Activated B cell treated with CpG ODN at 0.5 μM for 24 hours (primary cell): ENCODE measurements at regions of chr14 and their contacts with region 1.

Region 1: GRCh38 chr14:24141097-24141880 is at the start of gene EMC9:
- DNase-seq: peak; percentile 92
- ATAC-seq: peak; percentile 90
- H3K4me3 Mint-ChIP-seq: peak within 1 kb of the TSS; percentile 83
- H3K27ac Mint-ChIP-seq: peak within 1 kb of the TSS; percentile 87
- H3K4me1 Mint-ChIP-seq: peaks cover 78% of the 10 kb centered on the region
- H3K27me3 Mint-ChIP-seq: no peaks in the 10 kb centered on the region
- CTCF ChIP-seq: no peak
- total RNA-seq, gene EMC9: 22.5 and 22.6 TPM in 2 replicates

Region 2: GRCh38 chr14:23816371-23816770 is 324.9 kb before region 1 on chr14:
- CTCF ChIA-PET with region 1: no interaction called
- POLR2A ChIA-PET with region 1: no interaction called
- intact Hi-C with region 1: no loop called
- DNase-seq: no peak
- ATAC-seq: no peak
- H3K4me3 Mint-ChIP-seq: no peak overlapping the region
- H3K27ac Mint-ChIP-seq: no peak overlapping the region
- H3K4me1 Mint-ChIP-seq: no peaks in the 10 kb centered on the region
- H3K27me3 Mint-ChIP-seq: peaks cover 5% of the 10 kb centered on the region
- CTCF ChIP-seq: no peak

Region 3: GRCh38 chr14:24080888-24081738 is 60.2 kb before region 1 on chr14:
- CTCF ChIA-PET with region 1: no interaction called
- POLR2A ChIA-PET with region 1: interaction called, 10 read pairs
- intact Hi-C with region 1: loop called (anchors 2 kb)
- DNase-seq: peak; percentile 75
- ATAC-seq: peak; percentile 95
- H3K4me3 Mint-ChIP-seq: peak overlapping the region; percentile 82
- H3K27ac Mint-ChIP-seq: peak overlapping the region; percentile 83
- H3K4me1 Mint-ChIP-seq: peaks cover 32% of the 10 kb centered on the region
- H3K27me3 Mint-ChIP-seq: no peaks in the 10 kb centered on the region
- CTCF ChIP-seq: no peak

Region 4: DNA sequence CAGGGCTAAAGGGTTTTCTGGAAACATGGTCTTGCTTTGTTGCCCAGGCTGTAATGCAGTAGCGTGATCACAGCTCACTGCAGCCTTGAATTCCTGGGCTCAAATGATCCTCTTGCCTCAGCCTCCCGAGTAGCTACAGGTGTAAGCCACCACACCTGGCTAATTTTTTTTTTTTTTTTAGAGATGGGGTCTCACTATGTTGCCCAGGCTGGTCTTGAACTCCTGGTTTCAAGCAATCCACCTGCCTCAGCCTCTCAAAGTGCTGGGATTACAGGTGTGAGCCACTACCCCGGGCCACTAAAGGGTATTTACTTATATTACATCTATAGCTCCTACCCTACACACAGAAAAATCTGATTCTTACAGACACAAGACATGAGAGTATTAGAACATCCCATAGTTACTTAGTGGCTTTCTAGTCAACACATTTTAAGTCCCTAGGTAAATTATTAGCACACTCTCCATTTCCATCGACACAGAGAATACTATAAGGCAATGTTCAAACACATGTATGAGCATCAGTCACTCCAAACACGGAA is 32.9 kb before region 1 on chr14:
- CTCF ChIA-PET with region 1: interaction called, 28 read pairs
- POLR2A ChIA-PET with region 1: interaction called, 239 read pairs
- intact Hi-C with region 1: no loop called
- DNase-seq: no peak
- ATAC-seq: no peak
- H3K4me3 Mint-ChIP-seq: no peak overlapping the region
- H3K27ac Mint-ChIP-seq: peak overlapping the region; percentile 90
- H3K4me1 Mint-ChIP-seq: peaks cover 12% of the 10 kb centered on the region
- H3K27me3 Mint-ChIP-seq: no peaks in the 10 kb centered on the region
- CTCF ChIP-seq: no peak

Region 5: DNA sequence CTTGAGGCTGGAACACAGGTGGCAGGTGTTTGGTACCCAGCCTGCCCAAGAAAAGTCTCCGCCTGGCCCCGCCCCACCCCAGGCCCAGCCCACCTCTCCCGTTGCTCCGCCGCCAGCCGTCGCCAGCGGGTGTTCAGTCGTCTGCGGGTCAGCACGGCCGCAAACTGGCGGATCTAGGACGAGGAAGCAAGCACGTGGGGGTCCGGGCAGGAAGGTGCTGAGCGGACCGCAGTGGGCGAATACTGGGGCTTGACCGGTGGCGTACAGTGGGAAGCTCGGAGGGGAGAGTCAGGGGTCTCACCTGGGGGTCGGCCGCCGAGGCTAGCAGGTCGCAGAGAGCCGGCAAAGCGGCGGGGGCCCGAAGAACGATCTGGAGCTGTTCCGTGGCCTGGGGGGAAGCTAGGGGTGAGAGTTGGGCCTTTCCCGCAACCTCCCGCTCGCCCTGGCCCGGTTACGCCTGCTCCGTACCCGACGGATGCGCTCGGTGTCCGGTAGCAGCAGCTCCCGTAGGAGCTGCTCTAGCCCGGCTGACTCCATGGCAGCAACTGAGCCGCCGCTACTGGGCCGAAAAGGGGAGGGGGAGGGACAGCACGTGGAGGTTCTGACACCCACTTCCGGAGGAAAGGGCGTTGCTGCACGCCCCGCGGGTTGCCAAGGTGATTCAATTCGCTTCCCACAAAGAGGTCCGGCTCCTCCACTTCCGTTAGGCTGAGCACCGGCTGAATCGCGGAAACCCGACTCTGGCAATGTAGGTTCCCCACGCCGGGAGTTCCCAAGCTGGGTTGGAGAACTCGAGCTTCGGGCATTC is 47.2 kb after region 1 on chr14 and contains the start of gene IPO4:
- CTCF ChIA-PET with region 1: no interaction called
- POLR2A ChIA-PET with region 1: interaction called, 27 read pairs
- intact Hi-C with region 1: loop called (anchors 1 kb)
- DNase-seq: peak; percentile 81
- ATAC-seq: peak; percentile 92
- H3K4me3 Mint-ChIP-seq: peak within 1 kb of the TSS; percentile 91
- H3K27ac Mint-ChIP-seq: peak within 1 kb of the TSS; percentile 87
- H3K4me1 Mint-ChIP-seq: peaks cover 32% of the 10 kb centered on the region
- H3K27me3 Mint-ChIP-seq: no peaks in the 10 kb centered on the region
- CTCF ChIP-seq: no peak
- total RNA-seq, gene IPO4: 76.4 and 80.3 TPM in 2 replicates

Region 6: GRCh38 chr14:24195191-24196070 is 54.1 kb after region 1 on chr14 and contains the start of gene TM9SF1:
- CTCF ChIA-PET with region 1: no interaction called
- POLR2A ChIA-PET with region 1: interaction called, 27 read pairs
- intact Hi-C with region 1: no loop called
- DNase-seq: peak; percentile 91
- ATAC-seq: peak; percentile 83
- H3K4me3 Mint-ChIP-seq: peak within 1 kb of the TSS; percentile 96
- H3K27ac Mint-ChIP-seq: peak within 1 kb of the TSS; percentile 97
- H3K4me1 Mint-ChIP-seq: peaks cover 48% of the 10 kb centered on the region
- H3K27me3 Mint-ChIP-seq: no peaks in the 10 kb centered on the region
- CTCF ChIP-seq: no peak
- total RNA-seq, gene TM9SF1: 24.5 and 26.3 TPM in 2 replicates